Activated CD8-positive, alpha-beta T cell treated with anti-CD3 and anti-CD28 coated beads, Interleukin-2, amount 10 ng/mL, durations not matched to agents 7 days and 5 days (primary cell): ENCODE measurements at regions of chr5 and their contacts with region 1.

Region 1: GRCh38 chr5:157142317-157143126 is at the start of gene MED7:
- DNase-seq: peak; percentile 98
- ATAC-seq: peak; percentile 99
- H3K4me3 Mint-ChIP-seq: peak within 1 kb of the TSS; percentile 90
- H3K27ac Mint-ChIP-seq: peak within 1 kb of the TSS; percentile 98
- H3K4me1 Mint-ChIP-seq: peaks cover 36% of the 10 kb centered on the region
- H3K27me3 Mint-ChIP-seq: no peaks in the 10 kb centered on the region
- total RNA-seq, gene MED7: 13.1 to 13.9 TPM

Region 2: DNA sequence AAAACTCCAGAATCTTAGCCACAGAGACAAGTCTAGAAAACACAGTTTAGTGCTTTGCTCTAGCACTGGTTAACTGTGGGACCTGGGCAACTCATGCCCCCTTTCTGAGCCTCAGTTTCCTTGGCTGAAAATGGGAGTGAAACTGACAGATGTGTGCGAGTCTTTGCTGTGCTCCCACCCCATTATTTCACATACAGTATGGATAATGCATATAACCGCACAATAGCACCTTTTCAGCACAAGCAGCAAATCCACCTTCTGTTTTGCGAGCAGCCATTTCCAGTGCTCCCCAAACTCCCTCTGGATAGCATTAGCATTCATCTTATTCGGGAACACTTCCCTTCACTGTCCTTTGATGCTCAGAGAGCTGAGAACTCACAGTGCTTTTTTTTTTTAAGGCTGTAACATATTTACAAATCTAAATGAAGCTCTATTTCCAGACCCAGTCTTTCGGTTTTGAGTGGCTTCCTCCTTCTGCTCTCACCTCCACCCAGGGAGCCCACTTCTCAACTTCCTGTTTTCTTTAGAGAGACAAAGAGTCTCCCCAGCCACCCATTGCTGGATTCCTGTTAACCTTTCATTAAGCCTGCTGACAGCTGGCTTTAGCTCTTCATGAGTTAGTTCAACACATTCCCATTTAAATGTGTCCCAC is 228.7 kb before region 1 on chr5:
- CTCF ChIA-PET with region 1: no interaction called
- POLR2A ChIA-PET with region 1: interaction called, 11 read pairs
- DNase-seq: peak; percentile 64
- ATAC-seq: peak; percentile 92
- H3K4me3 Mint-ChIP-seq: peak overlapping the region; percentile 66
- H3K27ac Mint-ChIP-seq: peak overlapping the region; percentile 95
- H3K4me1 Mint-ChIP-seq: peaks cover 64% of the 10 kb centered on the region
- H3K27me3 Mint-ChIP-seq: no peaks in the 10 kb centered on the region

Region 3: GRCh38 chr5:157026789-157027424 is 115.6 kb before region 1 on chr5:
- CTCF ChIA-PET with region 1: interaction called, 12 read pairs
- POLR2A ChIA-PET with region 1: interaction called, 16 read pairs
- DNase-seq: peak; percentile 34
- ATAC-seq: no peak
- H3K4me3 Mint-ChIP-seq: no peak overlapping the region
- H3K27ac Mint-ChIP-seq: peak overlapping the region; percentile 81
- H3K4me1 Mint-ChIP-seq: peaks cover 91% of the 10 kb centered on the region
- H3K27me3 Mint-ChIP-seq: no peaks in the 10 kb centered on the region

Region 4: DNA sequence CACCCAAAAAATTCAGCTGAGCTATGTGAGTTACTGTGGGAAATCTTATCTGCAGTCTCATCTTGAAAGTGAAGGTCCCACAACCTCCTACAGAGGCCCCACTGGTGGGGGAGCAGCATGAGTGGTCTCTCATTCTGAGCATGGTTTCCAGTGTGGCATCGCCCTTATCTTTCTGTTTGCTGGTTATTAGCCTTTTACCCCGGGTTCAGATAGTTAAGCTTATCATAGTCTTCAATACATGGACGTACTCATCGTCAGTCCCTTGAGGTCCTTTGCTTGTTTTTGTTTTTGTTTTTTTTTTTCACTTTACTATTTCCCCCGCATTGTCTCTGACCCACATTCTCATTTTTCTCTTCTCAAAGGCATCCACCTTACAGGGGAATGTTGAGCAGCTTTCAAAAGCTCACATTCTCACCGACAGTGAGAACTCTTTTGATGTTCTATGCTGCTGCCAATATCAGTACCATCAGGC is 26.0 kb before region 1 on chr5:
- CTCF ChIA-PET with region 1: interaction called, 9 read pairs
- POLR2A ChIA-PET with region 1: interaction called, 58 read pairs
- DNase-seq: no peak
- ATAC-seq: peak; percentile 57
- H3K4me3 Mint-ChIP-seq: peak overlapping the region; percentile 7
- H3K27ac Mint-ChIP-seq: peak overlapping the region; percentile 56
- H3K4me1 Mint-ChIP-seq: peaks cover 43% of the 10 kb centered on the region
- H3K27me3 Mint-ChIP-seq: no peaks in the 10 kb centered on the region

Region 5: GRCh38 chr5:157157293-157157891 is 14.9 kb after region 1 on chr5:
- CTCF ChIA-PET with region 1: interaction called, 3 read pairs
- POLR2A ChIA-PET with region 1: interaction called, 13 read pairs
- DNase-seq: peak; percentile 18
- ATAC-seq: no peak
- H3K4me3 Mint-ChIP-seq: no peak overlapping the region
- H3K27ac Mint-ChIP-seq: no peak overlapping the region
- H3K4me1 Mint-ChIP-seq: peaks cover 68% of the 10 kb centered on the region
- H3K27me3 Mint-ChIP-seq: no peaks in the 10 kb centered on the region

Region 6: GRCh38 chr5:157189223-157189622 is 46.7 kb after region 1 on chr5:
- CTCF ChIA-PET with region 1: interaction called, 162 read pairs
- POLR2A ChIA-PET with region 1: interaction called, 106 read pairs
- DNase-seq: peak; percentile 41
- ATAC-seq: no peak
- H3K4me3 Mint-ChIP-seq: peak overlapping the region; percentile 99
- H3K27ac Mint-ChIP-seq: peak overlapping the region; percentile 82
- H3K4me1 Mint-ChIP-seq: peaks cover 79% of the 10 kb centered on the region
- H3K27me3 Mint-ChIP-seq: no peaks in the 10 kb centered on the region

Region 7: DNA sequence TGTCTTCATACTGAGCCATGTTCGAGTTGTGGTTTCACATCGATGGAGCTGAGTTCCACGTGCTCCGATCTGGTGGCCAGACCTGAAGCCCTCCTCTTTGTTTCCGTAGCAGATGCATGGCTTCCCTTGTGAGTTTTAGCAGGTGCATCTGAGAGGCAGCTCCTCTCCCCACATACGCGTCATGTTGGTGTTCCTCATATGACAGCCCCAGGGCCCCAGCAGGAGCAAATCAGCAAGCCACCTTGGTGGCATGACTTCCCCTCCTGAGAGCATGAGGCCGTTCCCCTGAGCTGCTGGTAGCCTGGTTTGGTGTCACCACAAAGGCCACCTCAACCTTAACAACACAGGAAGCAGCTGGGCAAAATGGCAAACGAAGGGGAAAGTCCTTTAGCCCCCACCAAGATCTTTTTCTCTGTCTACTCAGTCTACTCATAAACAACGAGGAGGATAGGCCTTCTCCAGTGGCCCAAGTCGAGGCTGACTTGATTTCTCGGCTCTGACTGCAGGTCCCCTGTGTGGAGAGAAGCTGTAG is 129.3 kb after region 1 on chr5:
- CTCF ChIA-PET with region 1: interaction called, 23 read pairs
- POLR2A ChIA-PET with region 1: interaction called, 29 read pairs
- DNase-seq: peak; percentile 97
- ATAC-seq: peak; percentile 87
- H3K4me3 Mint-ChIP-seq: peak overlapping the region; percentile 79
- H3K27ac Mint-ChIP-seq: peak overlapping the region; percentile 95
- H3K4me1 Mint-ChIP-seq: peaks cover 78% of the 10 kb centered on the region
- H3K27me3 Mint-ChIP-seq: no peaks in the 10 kb centered on the region